A549 (cell line): ENCODE measurements at regions of chr17 and their contacts with region 1.

Region 1: DNA sequence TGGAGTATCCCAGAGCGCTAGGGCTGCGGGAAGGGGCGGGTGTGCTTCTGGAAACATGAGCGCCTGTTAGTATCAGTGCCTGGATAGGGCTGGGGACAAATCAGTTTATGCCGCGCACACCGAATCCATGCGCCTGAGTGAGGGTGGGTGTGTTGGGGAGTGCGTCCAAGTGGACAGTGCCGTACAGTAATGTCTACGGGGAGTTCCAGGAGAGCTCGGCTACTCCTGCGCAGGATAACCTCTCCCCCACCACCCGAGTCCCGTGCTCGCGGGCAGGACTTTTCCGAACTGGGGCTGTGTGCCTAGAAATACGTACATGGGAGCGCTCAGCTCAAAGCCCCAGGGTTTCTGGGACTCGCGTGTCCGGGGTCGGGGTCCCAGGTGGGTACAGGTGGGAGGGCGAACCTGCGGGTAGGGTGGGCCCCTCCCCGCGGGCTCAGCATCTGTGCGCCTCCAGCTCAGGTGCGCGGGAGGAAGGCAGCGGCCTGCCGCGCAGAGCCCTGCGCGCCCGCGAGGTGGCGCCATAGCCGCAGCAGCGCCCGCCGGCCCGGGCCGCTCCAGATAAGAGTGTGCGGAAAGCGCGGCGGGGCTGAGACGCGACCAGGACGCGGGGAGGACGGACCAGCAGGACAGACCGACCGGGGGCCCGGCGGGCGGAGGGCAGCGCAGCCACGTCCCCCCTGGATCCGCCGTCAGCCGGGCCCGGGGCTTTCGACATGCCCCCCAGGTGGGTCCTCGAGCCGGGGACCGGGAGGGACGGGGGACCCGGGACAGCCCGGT is at the start of gene HIC1:
- DNase-seq: peak; percentile 83 to 92
- ATAC-seq: peak; percentile 48 to 82
- H3K4me3 ChIP-seq: peak within 1 kb of the TSS; percentile 50
- H3K27ac ChIP-seq: peak within 1 kb of the TSS; percentile 39 to 82; a peak in 5 of 6 replicates
- H3K4me1 ChIP-seq: 0 out of 3 replicates have a peak, but pooled peaks cover 5% of the 10 kb centered on the region
- CTCF ChIP-seq: peak; percentile 98
- EP300 ChIP-seq: no peak
- POLR2A ChIP-seq: no peak
- RAD21 ChIP-seq: peak; percentile 71 to 94
- polyA plus RNA-seq, gene HIC1: 0.13 and 0.28 TPM in 2 replicates

Region 2: DNA sequence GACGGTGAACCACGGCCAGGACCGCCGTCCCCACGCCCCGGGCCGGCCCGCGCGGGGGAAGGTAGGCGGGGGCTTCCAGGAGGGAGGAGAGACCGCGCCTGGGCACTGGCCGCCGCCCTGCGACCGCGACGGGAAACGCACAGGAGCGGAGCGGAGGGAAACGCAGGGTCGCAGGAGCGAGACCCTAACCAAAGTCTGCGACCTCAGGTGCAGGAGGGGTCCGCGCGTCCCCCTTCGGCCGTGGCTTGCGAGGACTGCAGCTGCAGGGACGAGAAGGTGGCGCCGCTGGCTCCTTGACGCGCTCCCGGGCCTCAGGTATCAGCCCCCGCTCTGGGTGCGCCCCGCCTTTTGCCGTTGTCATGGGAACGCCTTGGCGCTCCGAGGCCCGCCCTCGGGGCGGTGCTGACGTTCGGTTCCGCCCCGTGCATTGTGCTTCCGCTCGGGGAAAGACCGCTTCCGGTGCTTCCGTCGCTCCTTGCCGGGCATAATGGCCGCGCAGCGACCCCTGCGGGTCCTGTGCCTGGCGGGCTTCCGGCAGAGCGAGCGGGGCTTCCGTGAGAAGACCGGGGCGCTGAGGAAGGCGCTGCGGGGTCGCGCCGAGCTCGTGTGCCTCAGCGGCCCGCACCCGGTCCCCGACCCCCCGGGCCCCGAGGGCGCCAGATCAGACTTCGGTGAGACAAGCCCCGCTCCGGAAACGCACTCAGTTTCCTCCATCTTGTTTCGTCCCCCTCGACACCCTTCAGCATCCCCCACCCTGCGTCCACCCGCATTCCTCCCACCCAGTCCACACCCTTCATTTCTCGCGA is 12.9 kb before region 1 on chr17 and contains the start of gene OVCA2:
- CTCF ChIA-PET with region 1: interaction called, 128 read pairs
- POLR2A ChIA-PET with region 1: no interaction called
- DNase-seq: peak; percentile 94 to 96
- ATAC-seq: peak; percentile 82 to 91
- H3K4me3 ChIP-seq: peak within 1 kb of the TSS; percentile 85
- H3K27ac ChIP-seq: peak within 1 kb of the TSS; percentile 93 to 99
- H3K4me1 ChIP-seq: peaks cover 24% of the 10 kb centered on the region
- CTCF ChIP-seq: peak; percentile 47
- EP300 ChIP-seq: no peak
- POLR2A ChIP-seq: peak; percentile 71
- RAD21 ChIP-seq: peak; percentile 56 to 61
- polyA plus RNA-seq, gene OVCA2: 66.3 and 73.1 TPM in 2 replicates

Region 3: DNA sequence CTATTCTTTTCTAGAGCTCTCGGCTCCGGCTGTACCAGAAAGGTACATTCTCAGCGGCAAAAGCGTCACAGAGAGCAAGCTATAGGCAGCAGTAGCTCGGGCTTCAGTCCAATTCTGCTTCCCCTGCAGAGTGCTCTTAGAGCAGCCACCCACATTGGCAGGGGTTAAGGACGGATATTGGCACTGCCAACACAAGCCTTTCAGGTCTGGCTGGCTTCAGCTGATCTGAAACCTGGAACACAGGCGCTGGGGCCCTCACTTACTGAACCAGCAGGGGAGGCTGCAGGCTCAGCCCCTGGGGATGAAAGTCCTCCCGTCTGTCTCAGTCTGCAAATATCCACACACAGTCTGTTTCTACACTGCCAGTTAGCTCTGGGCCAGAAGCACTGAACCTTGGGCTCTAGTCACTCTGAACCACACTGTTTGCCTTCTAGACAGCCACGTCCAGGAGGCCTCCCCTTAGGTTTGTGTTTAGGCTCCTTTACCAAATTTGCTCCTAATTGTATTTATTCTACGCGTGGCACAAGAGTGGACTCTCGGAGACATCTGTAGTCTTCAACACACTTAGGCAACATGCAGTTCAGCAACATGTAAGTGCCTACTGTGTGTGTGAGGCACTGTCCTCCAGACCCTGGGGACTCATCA is 40.3 kb after region 1 on chr17:
- CTCF ChIA-PET with region 1: interaction called, 15 read pairs
- POLR2A ChIA-PET with region 1: no interaction called
- DNase-seq: peak in 1 of 2 experiments; percentile 31
- ATAC-seq: peak; percentile 44 to 72; a peak in 4 of 6 replicates
- H3K4me3 ChIP-seq: no peak overlapping the region
- H3K27ac ChIP-seq: no peak overlapping the region
- H3K4me1 ChIP-seq: no peaks in the 10 kb centered on the region
- CTCF ChIP-seq: no peak
- EP300 ChIP-seq: no peak
- POLR2A ChIP-seq: no peak
- RAD21 ChIP-seq: peak in 1 of 2 experiments; percentile 37; a peak in 1 of 5 replicates

Region 4: GRCh38 chr17:2172077-2172851 is 117.6 kb after region 1 on chr17:
- CTCF ChIA-PET with region 1: interaction called, 19 read pairs
- POLR2A ChIA-PET with region 1: no interaction called
- DNase-seq: peak in 1 of 2 experiments; percentile 26
- ATAC-seq: peak in 1 of 2 experiments; percentile 17; a peak in 1 of 6 replicates
- H3K4me3 ChIP-seq: no peak overlapping the region
- H3K27ac ChIP-seq: peak overlapping the region; percentile 10 to 29; a peak in 3 of 6 replicates
- H3K4me1 ChIP-seq: peaks cover 37% of the 10 kb centered on the region
- CTCF ChIP-seq: no peak
- EP300 ChIP-seq: no peak
- POLR2A ChIP-seq: no peak
- RAD21 ChIP-seq: no peak

Region 5: DNA sequence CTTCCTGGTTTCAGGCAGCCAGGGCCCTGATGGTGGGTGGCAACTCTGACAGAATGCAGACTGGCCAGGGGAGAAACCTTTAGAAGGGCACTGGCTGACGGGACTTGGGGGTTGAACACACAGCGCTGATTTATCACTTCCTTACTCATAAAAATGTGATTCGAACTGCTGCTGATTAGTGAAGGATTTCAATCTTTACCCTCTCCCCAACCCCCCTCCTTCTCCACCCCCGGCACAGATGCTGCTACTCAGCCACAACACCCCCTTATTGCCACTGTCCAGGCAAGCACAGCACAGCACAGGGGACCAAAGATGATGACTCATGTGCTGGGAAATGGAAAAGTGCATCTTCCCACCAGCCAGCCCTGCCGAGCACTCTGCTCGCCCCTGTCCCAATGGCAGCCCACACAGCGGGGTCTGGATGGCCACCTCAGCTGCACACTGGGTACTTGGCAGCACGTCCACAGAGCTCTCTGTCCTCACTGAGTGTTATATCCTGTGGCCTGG is 178.8 kb after region 1 on chr17:
- CTCF ChIA-PET with region 1: interaction called, 117 read pairs
- POLR2A ChIA-PET with region 1: interaction called, 3 read pairs
- DNase-seq: no peak
- ATAC-seq: no peak
- H3K4me3 ChIP-seq: no peak overlapping the region
- H3K27ac ChIP-seq: no peak overlapping the region
- H3K4me1 ChIP-seq: no peaks in the 10 kb centered on the region
- CTCF ChIP-seq: no peak
- EP300 ChIP-seq: no peak
- POLR2A ChIP-seq: no peak
- RAD21 ChIP-seq: no peak

Region 6: DNA sequence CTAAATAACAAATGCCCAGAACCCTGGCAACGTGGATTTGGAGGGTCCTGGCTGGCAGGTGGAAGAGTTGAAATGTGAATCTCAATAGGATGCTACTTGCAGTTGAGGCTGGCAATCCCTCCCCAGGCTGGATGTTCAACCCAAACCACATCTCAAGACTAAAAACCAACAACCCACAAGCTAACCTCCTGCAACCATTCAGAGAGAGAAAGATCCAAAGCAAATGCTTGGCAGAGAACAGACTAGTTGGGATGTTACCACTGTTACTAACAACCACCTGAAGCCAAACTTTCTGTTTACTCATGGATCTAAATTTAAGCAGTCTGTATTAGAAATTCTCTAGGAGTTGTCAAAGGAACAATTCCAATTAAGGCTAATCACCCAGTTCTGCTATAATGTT is 221.0 kb after region 1 on chr17:
- CTCF ChIA-PET with region 1: interaction called, 201 read pairs
- POLR2A ChIA-PET with region 1: no interaction called
- DNase-seq: no peak
- ATAC-seq: no peak
- H3K4me3 ChIP-seq: no peak overlapping the region
- H3K27ac ChIP-seq: no peak overlapping the region
- H3K4me1 ChIP-seq: no peaks in the 10 kb centered on the region
- CTCF ChIP-seq: no peak
- EP300 ChIP-seq: no peak
- POLR2A ChIP-seq: no peak
- RAD21 ChIP-seq: no peak

Region 7: DNA sequence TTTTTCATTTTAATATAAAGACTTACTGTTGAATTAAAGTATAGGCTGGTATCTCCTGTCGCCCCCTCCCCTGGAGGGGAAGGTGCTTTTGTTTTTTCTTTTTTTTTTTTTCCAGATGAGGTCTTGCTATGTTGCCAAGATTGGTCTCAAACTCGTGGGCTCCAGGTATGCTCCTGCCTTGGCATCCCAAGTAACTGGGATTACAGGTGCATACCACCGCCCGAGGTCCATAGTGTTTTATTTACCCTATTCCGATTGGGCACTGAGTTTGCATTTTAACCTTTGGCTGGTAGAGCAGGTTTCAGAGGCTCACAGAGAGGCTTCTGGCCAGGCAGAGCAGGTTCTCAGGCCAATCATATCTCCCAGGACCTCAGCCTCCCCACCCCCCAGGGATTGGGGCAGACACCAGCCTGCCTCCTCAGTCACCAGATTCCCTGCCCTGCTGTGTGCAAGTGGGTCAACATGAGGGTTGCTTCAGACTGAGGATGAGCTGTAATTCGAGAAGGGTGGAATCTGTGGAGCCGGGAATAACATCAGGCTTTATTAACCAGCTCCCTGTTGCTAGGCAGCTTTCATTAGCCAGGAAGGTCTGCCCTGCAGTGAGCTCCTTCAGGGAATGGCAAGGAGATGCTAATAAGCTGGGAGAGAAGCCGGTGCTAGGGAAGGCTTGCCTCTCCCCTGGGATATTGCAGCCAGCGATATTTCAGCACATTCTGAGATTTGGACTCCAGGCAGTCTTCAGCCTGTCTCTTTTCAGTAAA is 293.0 kb after region 1 on chr17:
- CTCF ChIA-PET with region 1: interaction called, 10 read pairs
- POLR2A ChIA-PET with region 1: no interaction called
- DNase-seq: peak; percentile 47 to 84
- ATAC-seq: peak; percentile 78 to 87
- H3K4me3 ChIP-seq: no peak overlapping the region
- H3K27ac ChIP-seq: peak overlapping the region; percentile 14 to 77; a peak in 4 of 6 replicates
- H3K4me1 ChIP-seq: peaks cover 14% of the 10 kb centered on the region
- CTCF ChIP-seq: no peak
- EP300 ChIP-seq: no peak
- POLR2A ChIP-seq: no peak
- RAD21 ChIP-seq: no peak